K562 (cell line): ENCODE measurements at regions of chr10 and their contacts with region 1.

Region 1: GRCh38 chr10:69202332-69202731 is 17.8 kb upstream of the HKDC1 start:
- DNase-seq: no peak
- ATAC-seq: peak; percentile 60
- H3K4me3 ChIP-seq: no peak overlapping the region
- H3K27ac ChIP-seq: no peak overlapping the region
- H3K4me1 ChIP-seq: no peaks in the 10 kb centered on the region
- H3K27me3 ChIP-seq: no peaks in the 10 kb centered on the region
- CTCF ChIP-seq: no peak
- EP300 ChIP-seq: no peak; the same call in 1 of the 2 replicates
- POLR2A ChIP-seq: no peak
- RAD21 ChIP-seq: no peak

Region 2: DNA sequence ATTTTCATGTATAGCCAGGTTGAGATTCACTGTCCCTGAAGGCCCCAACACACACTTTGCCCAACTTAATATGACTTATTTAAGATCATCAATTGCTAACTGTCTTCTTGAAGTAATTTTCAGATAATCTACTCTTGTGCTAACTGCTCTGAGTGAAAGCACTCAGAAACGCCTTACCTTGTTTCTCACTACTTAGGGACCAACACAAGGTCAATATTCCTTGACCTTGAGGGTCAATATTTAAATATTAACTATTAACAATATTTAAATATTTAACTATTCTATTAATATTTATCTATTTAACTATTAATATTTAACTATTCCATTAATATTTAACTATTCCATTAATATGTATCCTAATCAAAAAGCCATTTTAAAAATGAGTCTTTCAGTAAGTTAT is 896.5 kb before region 1 on chr10:
- CTCF ChIA-PET with region 1: no interaction called
- POLR2A ChIA-PET with region 1: no interaction called
- in situ Hi-C with region 1: no loop called
- intact Hi-C with region 1: no loop called
- DNase-seq: no peak
- ATAC-seq: no peak
- H3K4me3 ChIP-seq: no peak overlapping the region
- H3K27ac ChIP-seq: no peak overlapping the region
- H3K4me1 ChIP-seq: no peaks in the 10 kb centered on the region
- H3K27me3 ChIP-seq: no peaks in the 10 kb centered on the region
- CTCF ChIP-seq: no peak
- EP300 ChIP-seq: no peak
- POLR2A ChIP-seq: no peak
- RAD21 ChIP-seq: no peak

Region 3: GRCh38 chr10:69186524-69186923 is 15.8 kb before region 1 on chr10:
- CTCF ChIA-PET with region 1: no interaction called
- POLR2A ChIA-PET with region 1: interaction called, 95 read pairs
- in situ Hi-C with region 1: no loop called
- intact Hi-C with region 1: no loop called
- DNase-seq: no peak
- ATAC-seq: no peak
- H3K4me3 ChIP-seq: no peak overlapping the region
- H3K27ac ChIP-seq: no peak overlapping the region
- H3K4me1 ChIP-seq: peaks cover 0 to 2% of the 10 kb centered on the region in 2 experiments; a peak in 1 of 5 replicates
- H3K27me3 ChIP-seq: no peaks in the 10 kb centered on the region
- CTCF ChIP-seq: no peak
- EP300 ChIP-seq: no peak
- POLR2A ChIP-seq: no peak
- RAD21 ChIP-seq: no peak